ENCODE measurements at regions of chr14 and their contacts with region 1.

Region 1: DNA sequence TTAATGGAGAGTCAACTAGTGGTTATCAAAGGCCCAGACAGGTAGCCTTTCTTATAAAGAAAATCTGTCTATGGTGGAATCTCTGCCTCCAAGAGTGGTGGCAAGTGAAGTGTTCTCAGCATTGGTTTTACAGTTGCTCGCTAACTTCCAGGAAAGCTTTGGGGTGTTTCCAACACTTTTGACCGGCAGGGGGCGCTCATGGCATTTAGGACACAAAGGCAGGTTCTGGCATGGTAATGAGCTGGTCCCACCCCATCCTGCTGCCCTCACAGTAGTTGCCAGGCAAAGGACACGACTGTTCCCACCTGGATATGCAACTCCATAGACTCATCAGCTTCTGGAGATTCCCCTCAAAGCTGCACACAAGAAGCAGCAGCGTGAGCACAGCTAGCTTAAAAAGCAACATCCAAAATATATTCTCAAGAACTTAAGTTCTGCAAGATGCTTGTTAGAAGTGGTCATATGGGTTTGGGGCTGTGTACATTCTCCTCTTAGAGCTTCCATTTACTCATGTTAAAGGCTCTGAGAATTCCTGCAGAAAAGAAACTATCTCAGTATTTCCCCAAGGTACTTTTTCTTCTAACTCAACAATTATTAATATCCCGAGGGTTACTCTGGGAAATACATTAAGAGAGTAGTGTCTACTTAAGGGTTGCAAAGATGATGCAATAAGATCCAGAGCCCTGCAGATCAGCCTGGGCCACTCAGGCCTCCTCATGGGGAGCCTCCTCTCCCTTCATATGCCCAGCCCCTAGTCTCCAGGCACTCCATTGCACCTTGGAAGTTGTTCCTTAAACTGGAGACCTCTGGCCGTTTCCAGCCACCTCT is 14.8 kb downstream of the PROX2 start:
- DNase-seq: peak; percentile 82
- ATAC-seq: peak; percentile 74
- H3K4me3 Mint-ChIP-seq: no peak overlapping the region
- H3K27ac Mint-ChIP-seq: no peak overlapping the region
- H3K4me1 Mint-ChIP-seq: peaks cover 6% of the 10 kb centered on the region
- H3K27me3 Mint-ChIP-seq: no peaks in the 10 kb centered on the region
- CTCF ChIP-seq: no peak

Region 2: DNA sequence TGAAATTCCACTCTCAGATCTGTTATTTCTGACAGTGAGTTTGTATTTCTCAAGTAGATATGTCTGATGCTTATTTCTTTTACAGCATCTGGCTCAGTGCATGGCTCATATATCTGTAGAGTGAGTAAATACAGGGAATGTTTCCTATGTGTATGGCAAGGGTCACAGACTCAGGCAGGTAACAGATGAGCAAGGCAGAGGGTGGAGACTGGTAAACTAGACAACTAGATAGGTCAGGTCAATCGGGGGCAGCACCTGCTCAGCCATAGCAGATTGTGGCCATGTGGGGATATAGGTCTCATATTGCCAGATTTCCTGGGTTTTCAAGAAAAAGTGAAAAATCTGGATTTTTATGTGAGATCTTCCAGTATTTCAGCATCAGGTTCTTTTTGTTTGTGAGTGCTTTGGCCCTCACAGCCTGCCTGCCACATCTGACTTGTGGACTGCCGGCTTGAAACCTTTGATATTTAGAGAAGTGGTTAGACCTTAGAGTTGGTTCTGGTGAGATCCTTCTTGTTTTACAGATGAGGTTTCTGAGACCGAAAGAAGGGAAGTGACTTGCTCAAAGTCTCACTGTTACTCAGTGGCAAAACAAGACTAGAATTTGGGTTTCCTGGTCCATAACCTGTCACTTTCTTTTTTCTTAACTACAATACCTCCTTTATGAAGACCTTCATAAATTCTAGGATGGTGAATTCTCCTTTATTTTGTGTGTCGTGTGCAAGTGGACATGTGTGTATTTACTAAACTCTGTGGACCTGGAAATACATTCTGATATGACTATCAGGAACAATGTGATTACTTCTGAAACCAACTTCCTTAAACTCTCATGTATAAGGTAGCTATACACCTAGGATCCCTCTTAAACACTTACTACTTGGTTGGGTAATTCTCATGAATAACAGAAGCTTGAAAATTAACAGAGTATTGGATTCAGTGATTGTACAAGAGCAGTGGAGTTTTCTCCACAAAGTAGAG is 19.6 kb before region 1 on chr14:
- CTCF ChIA-PET with region 1: interaction called, 14 read pairs
- POLR2A ChIA-PET with region 1: interaction called, 3 read pairs
- intact Hi-C with region 1: no loop called
- DNase-seq: no peak
- ATAC-seq: peak; percentile 84
- H3K4me3 Mint-ChIP-seq: peak overlapping the region; percentile 63
- H3K27ac Mint-ChIP-seq: peak overlapping the region; percentile 93
- H3K4me1 Mint-ChIP-seq: peaks cover 59% of the 10 kb centered on the region
- H3K27me3 Mint-ChIP-seq: no peaks in the 10 kb centered on the region
- CTCF ChIP-seq: no peak

Region 3: GRCh38 chr14:74881431-74882361 is 20.6 kb after region 1 on chr14 and contains the start of gene DLST:
- CTCF ChIA-PET with region 1: interaction called, 15 read pairs
- POLR2A ChIA-PET with region 1: no interaction called
- intact Hi-C with region 1: no loop called
- DNase-seq: peak; percentile 88
- ATAC-seq: peak; percentile 86
- H3K4me3 Mint-ChIP-seq: peak within 1 kb of the TSS; percentile 99
- H3K27ac Mint-ChIP-seq: peak within 1 kb of the TSS; percentile 97
- H3K4me1 Mint-ChIP-seq: peaks cover 51% of the 10 kb centered on the region
- H3K27me3 Mint-ChIP-seq: no peaks in the 10 kb centered on the region
- CTCF ChIP-seq: no peak
- total RNA-seq, gene DLST: 73.1 and 90.4 TPM in 2 replicates

Region 4: DNA sequence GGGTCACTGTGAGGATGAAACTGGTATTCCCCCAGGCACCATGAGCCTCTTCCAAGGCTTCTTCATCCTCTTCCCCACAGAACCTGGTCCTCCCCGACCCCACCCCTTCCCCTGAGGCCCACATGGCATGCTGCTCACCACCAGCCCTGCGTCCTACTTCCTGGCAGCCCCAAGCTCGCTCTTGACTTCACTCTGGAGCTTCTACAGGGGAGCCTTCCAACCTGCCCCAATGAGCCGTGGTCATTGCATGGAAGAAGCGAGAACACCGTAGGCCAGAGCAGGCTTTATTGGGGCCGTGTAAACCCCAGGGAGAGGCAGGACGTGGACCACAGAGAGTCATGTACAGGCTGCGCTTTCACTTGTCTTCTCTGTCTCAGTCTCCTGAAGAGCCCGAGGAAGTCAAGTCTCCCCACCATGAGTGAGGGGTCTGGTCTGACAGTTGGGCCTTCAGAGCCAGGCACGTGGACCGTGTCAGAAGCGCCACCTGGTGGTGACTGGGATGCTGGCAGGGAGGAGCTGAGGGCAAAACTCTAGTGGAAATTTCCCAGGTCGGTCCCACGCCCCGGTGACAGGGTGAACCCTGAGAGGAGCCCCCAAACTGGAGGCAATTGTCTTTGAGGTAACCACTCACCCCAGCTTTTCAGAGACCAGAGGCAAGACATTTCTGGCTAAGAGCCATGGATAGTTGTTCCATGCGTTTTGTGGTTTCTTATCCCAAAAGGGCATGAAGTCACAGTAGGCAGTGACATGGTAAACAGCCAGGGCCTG is 44.4 kb after region 1 on chr14:
- CTCF ChIA-PET with region 1: interaction called, 288 read pairs
- POLR2A ChIA-PET with region 1: interaction called, 12 read pairs
- intact Hi-C with region 1: loop called (anchors 1 kb)
- DNase-seq: peak; percentile 70
- ATAC-seq: peak; percentile 73
- H3K4me3 Mint-ChIP-seq: no peak overlapping the region
- H3K27ac Mint-ChIP-seq: peak overlapping the region; percentile 53
- H3K4me1 Mint-ChIP-seq: peaks cover 43% of the 10 kb centered on the region
- H3K27me3 Mint-ChIP-seq: no peaks in the 10 kb centered on the region
- CTCF ChIP-seq: peak; percentile 81

Region 5: DNA sequence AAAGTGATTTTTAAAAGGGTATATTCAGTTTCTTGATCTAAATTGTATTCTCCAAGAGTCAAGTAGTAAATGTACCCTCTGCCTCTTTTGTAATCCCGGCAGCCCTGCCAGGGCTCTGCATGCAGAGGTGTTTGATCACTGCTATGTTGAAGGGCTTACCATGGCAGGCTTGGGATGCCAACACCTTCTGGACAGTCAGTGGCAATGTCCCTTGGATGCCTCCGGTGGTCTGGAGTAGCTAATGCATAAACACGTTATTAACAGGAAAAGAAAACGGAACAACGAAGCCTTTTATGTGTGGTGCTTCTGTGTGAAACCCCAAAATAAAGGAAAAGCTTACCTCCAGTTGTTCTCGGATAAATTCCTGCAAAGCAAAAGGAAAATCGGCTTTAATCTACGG is 161.5 kb after region 1 on chr14:
- CTCF ChIA-PET with region 1: no interaction called
- POLR2A ChIA-PET with region 1: no interaction called
- intact Hi-C with region 1: loop called (anchors 5 kb)
- DNase-seq: no peak
- ATAC-seq: no peak
- H3K4me3 Mint-ChIP-seq: no peak overlapping the region
- H3K27ac Mint-ChIP-seq: no peak overlapping the region
- H3K4me1 Mint-ChIP-seq: no peaks in the 10 kb centered on the region
- H3K27me3 Mint-ChIP-seq: no peaks in the 10 kb centered on the region
- CTCF ChIP-seq: no peak

Region 6: DNA sequence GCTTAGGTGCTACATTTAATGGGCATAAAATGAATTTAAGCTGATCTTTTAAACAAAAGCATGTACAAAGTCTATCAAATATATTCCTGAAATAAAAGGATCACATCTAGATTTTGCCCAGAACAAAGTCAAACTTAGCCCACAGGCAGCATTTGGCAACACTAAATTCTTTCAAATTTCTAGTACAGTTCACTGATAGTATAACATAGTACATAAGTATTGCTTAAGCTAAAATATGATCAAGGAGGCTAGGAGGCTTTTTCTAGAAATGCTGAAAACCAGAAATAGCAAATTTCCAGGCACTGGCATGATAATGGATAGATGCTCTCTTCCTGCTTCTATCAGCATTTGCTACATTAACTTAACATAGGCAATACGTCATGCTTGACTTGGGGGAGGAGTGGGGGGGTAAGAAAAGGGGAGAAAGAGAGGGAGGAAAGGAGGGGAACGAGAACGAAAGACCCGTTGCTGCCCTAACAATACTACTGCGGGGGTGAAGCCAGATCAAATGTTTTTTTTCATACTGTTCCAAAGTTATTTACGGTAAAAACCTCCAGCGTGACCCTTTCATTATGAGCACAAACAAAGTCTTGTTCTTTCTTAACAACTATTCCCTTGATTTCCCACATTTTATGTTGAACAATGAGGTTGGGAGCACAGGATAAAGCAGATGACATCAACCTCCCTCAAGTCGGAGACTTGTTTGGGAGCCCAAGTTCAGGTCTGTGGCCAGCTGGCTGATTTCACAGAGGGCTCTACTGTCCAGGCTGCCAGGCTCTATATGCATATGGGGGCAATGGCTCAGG is 304.7 kb after region 1 on chr14:
- CTCF ChIA-PET with region 1: no interaction called
- POLR2A ChIA-PET with region 1: no interaction called
- intact Hi-C with region 1: no loop called
- DNase-seq: no peak
- ATAC-seq: no peak
- H3K4me3 Mint-ChIP-seq: no peak overlapping the region
- H3K27ac Mint-ChIP-seq: no peak overlapping the region
- H3K4me1 Mint-ChIP-seq: peaks cover 35% of the 10 kb centered on the region
- H3K27me3 Mint-ChIP-seq: no peaks in the 10 kb centered on the region
- CTCF ChIP-seq: no peak

Region 7: DNA sequence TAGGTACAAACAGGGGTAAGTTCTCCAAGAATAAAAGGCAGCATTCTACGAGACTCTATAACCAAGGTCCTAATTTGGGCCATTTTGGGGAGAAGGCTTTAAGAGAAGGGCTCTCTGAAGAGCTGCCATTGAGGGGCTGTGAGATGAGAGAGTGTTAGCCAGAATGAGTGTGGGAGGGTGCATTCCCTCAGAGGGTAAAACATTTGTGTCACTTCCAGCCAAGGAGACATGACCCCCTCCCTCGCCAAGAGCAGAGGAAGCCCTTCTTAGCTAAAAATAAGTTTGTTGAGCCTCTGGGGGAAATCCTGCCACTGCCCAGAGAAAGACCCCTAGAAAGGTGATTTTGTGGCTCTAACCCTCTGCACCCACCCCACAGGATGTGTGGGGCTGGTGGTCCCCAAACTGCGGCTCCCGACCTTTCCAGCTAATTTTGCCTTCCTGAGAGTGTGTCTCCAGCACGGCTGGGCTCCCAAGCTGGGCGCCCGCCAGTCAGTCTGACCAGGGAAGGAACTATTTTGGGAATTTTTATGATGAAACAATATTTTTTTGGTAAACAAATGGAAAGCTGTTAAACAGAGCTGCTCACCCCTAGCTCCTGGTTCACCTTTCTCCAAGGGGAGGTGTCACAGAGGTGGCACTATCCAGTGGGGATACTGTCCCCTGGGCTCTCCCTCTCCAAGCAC is 500.8 kb after region 1 on chr14:
- CTCF ChIA-PET with region 1: no interaction called
- POLR2A ChIA-PET with region 1: no interaction called
- intact Hi-C with region 1: no loop called
- DNase-seq: no peak
- ATAC-seq: no peak
- H3K4me3 Mint-ChIP-seq: no peak overlapping the region
- H3K27ac Mint-ChIP-seq: no peak overlapping the region
- H3K4me1 Mint-ChIP-seq: no peaks in the 10 kb centered on the region
- H3K27me3 Mint-ChIP-seq: peaks cover 3% of the 10 kb centered on the region
- CTCF ChIP-seq: no peak